Transverse colon (tissue), 4 donors: ENCODE measurements at regions of chr2 and their contacts with region 1.

Region 1: DNA sequence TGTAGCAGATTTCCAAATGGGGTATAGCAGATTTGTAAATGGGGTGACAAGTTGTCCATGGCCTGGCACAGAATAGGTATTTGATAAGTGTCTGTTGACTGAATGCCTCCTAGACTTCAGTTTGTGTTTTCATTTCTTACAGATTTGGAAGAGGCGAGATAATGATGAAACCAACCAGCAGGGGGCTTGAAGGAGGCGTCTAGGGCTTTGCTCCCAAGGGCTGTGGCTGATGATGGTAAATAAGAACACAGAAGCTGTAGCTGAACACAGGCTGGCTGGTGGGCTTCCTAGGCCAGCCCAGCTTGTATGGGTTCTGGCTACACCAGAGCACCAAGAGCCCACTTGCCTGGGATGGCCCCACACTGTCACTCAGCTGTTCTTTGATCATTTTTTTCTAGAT is 19.4 kb downstream of the SFTPB start:
- DNase-seq: no peak
- H3K4me3 ChIP-seq: no peak overlapping the region
- H3K27ac ChIP-seq: no peak overlapping the region
- H3K4me1 ChIP-seq: no peaks in the 10 kb centered on the region
- H3K27me3 ChIP-seq: no peaks in the 10 kb centered on the region
- CTCF ChIP-seq: peak in 4 of 5 experiments; percentile 15 to 22 (median 18)
- EP300 ChIP-seq: no peak
- POLR2A ChIP-seq: no peak

Region 2: GRCh38 chr2:85712849-85713602 is 64.4 kb after region 1 on chr2:
- in situ Hi-C with region 1: no loop called
- intact Hi-C with region 1: loop called (anchors 10 kb)
- DNase-seq: peak; percentile 54
- H3K4me3 ChIP-seq: no peak overlapping the region
- H3K27ac ChIP-seq: peak overlapping the region; percentile 19 to 63 (median 45)
- H3K4me1 ChIP-seq: peaks cover 0 to 39% (median 11%) of the 10 kb centered on the region in 4 donors
- H3K27me3 ChIP-seq: no peaks in the 10 kb centered on the region
- CTCF ChIP-seq: no peak
- EP300 ChIP-seq: peak; percentile 13
- POLR2A ChIP-seq: no peak

Region 3: GRCh38 chr2:85813982-85814801 is 165.6 kb after region 1 on chr2:
- in situ Hi-C with region 1: loop called in 2 of 4 experiments (anchors 25 kb)
- intact Hi-C with region 1: no loop called
- DNase-seq: peak; percentile 92
- H3K4me3 ChIP-seq: no peak overlapping the region
- H3K27ac ChIP-seq: no peak overlapping the region
- H3K4me1 ChIP-seq: peaks cover 0 to 17% (median 13%) of the 10 kb centered on the region in 4 donors
- H3K27me3 ChIP-seq: no peaks in the 10 kb centered on the region
- CTCF ChIP-seq: peak; percentile 92 to 94 (median 93)
- EP300 ChIP-seq: no peak
- POLR2A ChIP-seq: no peak

Region 4: DNA sequence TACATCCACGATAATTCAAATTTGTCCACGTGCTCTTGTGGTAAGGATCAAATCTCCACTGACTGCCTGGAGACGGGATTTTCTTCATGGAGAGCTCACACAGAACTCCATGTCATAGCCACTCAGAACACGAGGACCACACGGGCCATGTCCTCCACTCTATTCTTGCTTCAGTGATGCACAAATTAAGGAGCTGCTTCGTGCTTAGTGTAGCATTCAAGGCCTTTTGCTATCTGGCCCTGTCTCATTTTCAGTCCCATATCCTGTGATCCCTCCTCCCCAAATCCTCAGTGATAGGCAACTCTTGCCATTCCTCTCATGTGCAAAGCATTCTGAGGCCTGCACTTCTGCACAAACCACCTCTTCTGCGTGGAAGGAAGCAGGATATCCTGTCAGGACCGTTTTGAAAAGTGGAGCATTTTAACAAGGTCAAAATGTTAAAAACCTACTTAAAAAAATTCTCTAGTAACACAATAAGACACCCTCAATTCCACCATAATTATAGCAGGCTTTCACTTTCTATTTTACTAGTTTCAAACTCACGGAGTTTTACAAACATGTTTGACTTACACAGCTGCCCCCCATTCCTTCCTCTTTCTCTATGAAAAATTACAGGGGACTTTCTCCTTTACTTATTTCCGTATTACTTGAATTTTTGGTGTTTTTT is 205.0 kb after region 1 on chr2:
- in situ Hi-C with region 1: no loop called
- intact Hi-C with region 1: no loop called
- DNase-seq: no peak
- H3K4me3 ChIP-seq: no peak overlapping the region
- H3K27ac ChIP-seq: peak overlapping the region; percentile 63 to 74 (median 68)
- H3K4me1 ChIP-seq: peaks cover 4 to 23% (median 8%) of the 10 kb centered on the region in 4 donors
- H3K27me3 ChIP-seq: no peaks in the 10 kb centered on the region
- CTCF ChIP-seq: no peak
- EP300 ChIP-seq: no peak
- POLR2A ChIP-seq: no peak

Region 5: GRCh38 chr2:86079981-86080911 is 431.6 kb after region 1 on chr2:
- in situ Hi-C with region 1: loop called in 1 of 4 experiments (anchors 25 kb)
- intact Hi-C with region 1: no loop called
- DNase-seq: peak; percentile 91
- H3K4me3 ChIP-seq: no peak overlapping the region
- H3K27ac ChIP-seq: peak overlapping the region; percentile 13 to 49 (median 41)
- H3K4me1 ChIP-seq: peaks cover 4 to 14% (median 11%) of the 10 kb centered on the region in 4 donors
- H3K27me3 ChIP-seq: no peaks in the 10 kb centered on the region
- CTCF ChIP-seq: peak; percentile 69 to 87 (median 78)
- EP300 ChIP-seq: no peak
- POLR2A ChIP-seq: peak; percentile 10